H1 (cell line): ENCODE measurements at regions of chr5 and their contacts with region 1.

Region 1: GRCh38 chr5:155260798-155261197 is 247.2 kb downstream of the KIF4B start:
- DNase-seq: peak; percentile 39 to 51
- H3K4me3 ChIP-seq: no peak overlapping the region
- H3K27ac ChIP-seq: no peak overlapping the region
- H3K4me1 ChIP-seq: no peaks in the 10 kb centered on the region; a peak in 1 of 7 replicates
- H3K27me3 ChIP-seq: no peaks in the 10 kb centered on the region
- CTCF ChIP-seq: peak; percentile 28 to 81 (median 76)
- EP300 ChIP-seq: no peak
- POLR2A ChIP-seq: no peak
- RAD21 ChIP-seq: peak; percentile 78 to 87

Region 2: DNA sequence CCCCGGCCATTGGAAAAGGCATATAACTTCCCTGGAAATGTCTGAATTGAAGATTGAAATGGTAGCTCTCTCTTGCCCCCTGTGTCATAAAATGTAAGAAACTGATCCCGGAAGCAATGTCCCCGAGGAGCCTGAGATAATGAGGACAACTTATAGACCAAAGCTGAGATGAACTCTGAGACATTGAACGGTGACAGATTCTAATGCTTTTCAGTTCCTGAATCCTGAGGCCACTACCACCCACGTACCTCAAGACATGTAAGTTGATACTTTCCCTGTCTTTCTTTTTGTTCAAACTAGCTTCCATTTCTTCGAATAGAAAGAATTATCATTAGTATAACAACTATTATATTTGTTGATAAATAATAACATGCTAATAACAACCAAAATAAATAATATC is 196.2 kb before region 1 on chr5:
- CTCF ChIA-PET with region 1: no interaction called
- POLR2A ChIA-PET with region 1: no interaction called
- DNase-seq: no peak
- H3K4me3 ChIP-seq: no peak overlapping the region
- H3K27ac ChIP-seq: no peak overlapping the region
- H3K4me1 ChIP-seq: no peaks in the 10 kb centered on the region
- H3K27me3 ChIP-seq: no peaks in the 10 kb centered on the region
- CTCF ChIP-seq: no peak
- EP300 ChIP-seq: no peak
- POLR2A ChIP-seq: no peak
- RAD21 ChIP-seq: no peak

Region 3: GRCh38 chr5:155136216-155136850 is 124.5 kb before region 1 on chr5:
- CTCF ChIA-PET with region 1: interaction called, 58 read pairs
- POLR2A ChIA-PET with region 1: no interaction called
- DNase-seq: no peak
- H3K4me3 ChIP-seq: no peak overlapping the region
- H3K27ac ChIP-seq: no peak overlapping the region
- H3K4me1 ChIP-seq: peaks cover 0 to 5% (median 0%) of the 10 kb centered on the region in 4 experiments; a peak in 2 of 7 replicates
- H3K27me3 ChIP-seq: no peaks in the 10 kb centered on the region
- CTCF ChIP-seq: no peak
- EP300 ChIP-seq: no peak
- POLR2A ChIP-seq: no peak
- RAD21 ChIP-seq: no peak

Region 4: GRCh38 chr5:155239803-155240202 is 21.0 kb before region 1 on chr5:
- CTCF ChIA-PET with region 1: interaction called, 13 read pairs
- POLR2A ChIA-PET with region 1: no interaction called
- DNase-seq: no peak
- H3K4me3 ChIP-seq: no peak overlapping the region
- H3K27ac ChIP-seq: no peak overlapping the region
- H3K4me1 ChIP-seq: no peaks in the 10 kb centered on the region
- H3K27me3 ChIP-seq: no peaks in the 10 kb centered on the region
- CTCF ChIP-seq: no peak
- EP300 ChIP-seq: no peak
- POLR2A ChIP-seq: no peak
- RAD21 ChIP-seq: no peak

Region 5: GRCh38 chr5:155290937-155291336 is 30.1 kb after region 1 on chr5:
- CTCF ChIA-PET with region 1: interaction called, 10 read pairs
- POLR2A ChIA-PET with region 1: no interaction called
- DNase-seq: no peak
- H3K4me3 ChIP-seq: no peak overlapping the region
- H3K27ac ChIP-seq: no peak overlapping the region
- H3K4me1 ChIP-seq: peaks cover 0 to 3% (median 1%) of the 10 kb centered on the region in 4 experiments; a peak in 2 of 7 replicates
- H3K27me3 ChIP-seq: no peaks in the 10 kb centered on the region
- CTCF ChIP-seq: no peak
- EP300 ChIP-seq: no peak
- POLR2A ChIP-seq: no peak
- RAD21 ChIP-seq: no peak